IMR-90 (cell line): ENCODE measurements at regions of chr3 and their contacts with region 1.

Region 1: DNA sequence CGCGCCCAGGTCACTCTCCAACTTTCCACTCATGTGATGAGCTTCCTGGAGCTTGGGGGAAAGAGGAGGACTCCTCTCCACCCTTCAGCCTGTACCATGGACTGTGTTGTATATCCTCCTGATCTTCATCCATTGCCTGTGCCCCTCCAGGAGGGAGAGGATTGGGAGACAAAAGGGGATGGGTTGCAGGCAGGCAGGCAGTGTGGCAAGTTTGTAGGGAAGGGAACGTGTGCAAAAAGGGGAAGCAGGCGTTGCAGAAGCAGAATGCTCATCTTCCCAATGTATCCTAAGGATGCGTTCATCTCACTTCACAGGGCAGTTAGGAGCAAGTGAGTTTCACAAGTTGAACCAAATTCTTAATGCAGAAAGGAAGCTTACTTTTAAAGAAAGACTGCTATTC is 28.1 kb upstream of the GHSR start:
- DNase-seq: no peak
- ATAC-seq: no peak
- H3K4me3 ChIP-seq: no peak overlapping the region
- H3K27ac ChIP-seq: no peak overlapping the region
- H3K4me1 ChIP-seq: no peaks in the 10 kb centered on the region; the same call in 1 of the 2 replicates
- H3K27me3 ChIP-seq: no peaks in the 10 kb centered on the region; the same call in none of the 2 replicates
- CTCF ChIP-seq: no peak
- POLR2A ChIP-seq: no peak
- RAD21 ChIP-seq: no peak

Region 2: GRCh38 chr3:171646357-171647133 is 829.8 kb before region 1 on chr3:
- CTCF ChIA-PET with region 1: no interaction called
- POLR2A ChIA-PET with region 1: no interaction called
- dilution Hi-C with region 1: no loop called
- in situ Hi-C with region 1: loop called (anchors 10 kb)
- intact Hi-C with region 1: loop called (anchors 2 kb)
- DNase-seq: peak; percentile 80
- ATAC-seq: peak; percentile 90
- H3K4me3 ChIP-seq: no peak overlapping the region
- H3K27ac ChIP-seq: no peak overlapping the region
- H3K4me1 ChIP-seq: peaks cover 2% of the 10 kb centered on the region; the same call in 1 of the 2 replicates
- H3K27me3 ChIP-seq: no peaks in the 10 kb centered on the region
- CTCF ChIP-seq: peak; percentile 76
- POLR2A ChIP-seq: no peak
- RAD21 ChIP-seq: peak; percentile 83

Region 3: DNA sequence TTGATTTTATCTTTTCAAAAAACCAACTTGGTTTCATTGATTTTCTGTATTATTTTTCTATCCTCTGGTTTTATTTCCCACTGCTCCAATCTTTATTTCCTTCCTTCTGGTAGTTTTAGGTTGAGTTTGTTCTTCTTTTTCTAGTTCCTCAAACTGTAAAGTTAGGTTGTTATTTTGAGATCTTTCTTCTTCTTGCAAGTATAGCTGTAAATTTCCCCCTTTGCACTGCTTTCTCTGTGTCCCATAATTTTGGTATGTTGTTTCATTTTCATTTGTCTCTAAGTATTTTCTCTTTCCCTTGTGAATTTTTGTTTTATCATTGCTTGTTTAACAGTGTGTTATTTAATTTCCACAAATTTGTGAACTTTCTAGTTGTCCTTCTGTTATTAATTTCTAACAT is 786.1 kb before region 1 on chr3:
- CTCF ChIA-PET with region 1: no interaction called
- POLR2A ChIA-PET with region 1: no interaction called
- dilution Hi-C with region 1: no loop called
- in situ Hi-C with region 1: no loop called
- intact Hi-C with region 1: no loop called
- DNase-seq: no peak
- ATAC-seq: no peak
- H3K4me3 ChIP-seq: no peak overlapping the region
- H3K27ac ChIP-seq: no peak overlapping the region
- H3K4me1 ChIP-seq: no peaks in the 10 kb centered on the region; the same call in 1 of the 2 replicates
- H3K27me3 ChIP-seq: no peaks in the 10 kb centered on the region
- CTCF ChIP-seq: no peak
- POLR2A ChIP-seq: no peak
- RAD21 ChIP-seq: no peak

Region 4: DNA sequence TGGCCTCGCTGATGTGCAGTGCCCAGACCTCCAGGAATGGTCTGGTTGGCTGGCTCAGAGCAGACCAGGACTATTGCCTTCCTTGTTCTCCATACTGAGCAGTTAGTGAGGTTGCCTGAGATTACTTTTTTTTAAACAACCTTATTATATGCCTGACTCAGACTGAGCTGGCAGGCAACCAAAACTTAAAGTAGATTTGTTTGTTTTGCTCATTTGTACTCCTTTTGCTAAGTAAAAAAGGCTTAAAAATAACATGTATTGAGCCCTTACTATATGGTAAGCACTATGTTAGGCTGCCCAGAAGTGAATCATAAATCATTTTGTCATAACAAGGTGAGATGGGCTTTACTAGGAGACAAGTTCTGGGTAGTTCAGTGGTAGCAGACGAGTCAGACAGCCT is 120.5 kb before region 1 on chr3:
- CTCF ChIA-PET with region 1: no interaction called
- POLR2A ChIA-PET with region 1: no interaction called
- dilution Hi-C with region 1: no loop called
- in situ Hi-C with region 1: no loop called
- intact Hi-C with region 1: loop called (anchors 5 kb)
- DNase-seq: peak; percentile 98
- ATAC-seq: peak; percentile 96
- H3K4me3 ChIP-seq: no peak overlapping the region
- H3K27ac ChIP-seq: no peak overlapping the region
- H3K4me1 ChIP-seq: peaks cover 10% of the 10 kb centered on the region
- H3K27me3 ChIP-seq: no peaks in the 10 kb centered on the region
- CTCF ChIP-seq: no peak
- POLR2A ChIP-seq: no peak
- RAD21 ChIP-seq: no peak